ENCODE measurements at regions of chr16 and their contacts with region 1.

Region 1: GRCh38 chr16:68197250-68197649 is 38.7 kb downstream of the ESRP2 start:
- DNase-seq: no peak
- H3K4me3 ChIP-seq: no peak overlapping the region
- H3K4me3 Mint-ChIP-seq: no peak overlapping the region
- H3K27ac ChIP-seq: no peak overlapping the region
- H3K27ac Mint-ChIP-seq: peak overlapping the region in 1 of 8 donors; percentile 61
- H3K4me1 ChIP-seq: no peaks in the 10 kb centered on the region
- H3K4me1 Mint-ChIP-seq: peaks cover 9 to 28% (median 12%) of the 10 kb centered on the region in 3 donors
- H3K27me3 ChIP-seq: no peaks in the 10 kb centered on the region
- H3K27me3 Mint-ChIP-seq: no peaks in the 10 kb centered on the region

Region 2: DNA sequence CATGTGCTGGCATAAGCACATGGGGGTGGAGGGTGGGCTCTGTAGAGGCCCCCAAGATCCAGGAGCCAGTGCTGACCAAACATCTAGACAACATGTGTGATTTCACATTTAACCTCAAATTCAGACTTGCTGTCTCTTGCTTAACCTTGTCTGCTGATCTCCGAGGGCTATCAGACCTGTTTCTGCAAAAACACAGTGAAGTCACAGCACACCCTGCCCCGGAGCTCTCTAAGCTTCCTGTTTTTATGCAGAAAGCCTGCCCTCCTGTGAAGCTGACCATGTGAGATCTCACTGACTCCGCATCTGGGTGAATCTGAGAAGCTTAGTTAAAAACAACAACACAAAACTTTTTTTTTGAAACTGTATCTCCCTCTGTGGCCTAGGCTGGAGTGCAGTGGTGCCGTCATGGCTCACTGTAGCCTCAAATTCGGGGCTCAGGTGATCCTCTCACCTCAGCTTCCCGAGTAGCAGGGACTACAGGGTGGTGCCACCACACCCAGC is 191.4 kb before region 1 on chr16:
- CTCF ChIA-PET with region 1: no interaction called
- POLR2A ChIA-PET with region 1: no interaction called
- DNase-seq: peak in 3 of 5 donors; percentile 57 to 72 (median 70)
- H3K4me3 ChIP-seq: no peak overlapping the region
- H3K4me3 Mint-ChIP-seq: peak overlapping the region in 6 of 7 donors; percentile 49 to 78 (median 73)
- H3K27ac ChIP-seq: peak overlapping the region; percentile 41
- H3K27ac Mint-ChIP-seq: peak overlapping the region; percentile 82 to 98 (median 93)
- H3K4me1 ChIP-seq: peaks cover 41% of the 10 kb centered on the region
- H3K4me1 Mint-ChIP-seq: peaks cover 35 to 42% (median 42%) of the 10 kb centered on the region in 3 donors
- H3K27me3 ChIP-seq: no peaks in the 10 kb centered on the region
- H3K27me3 Mint-ChIP-seq: no peaks in the 10 kb centered on the region

Region 3: GRCh38 chr16:68155425-68155824 is 41.8 kb before region 1 on chr16:
- CTCF ChIA-PET with region 1: no interaction called
- POLR2A ChIA-PET with region 1: no interaction called
- DNase-seq: no peak
- H3K4me3 ChIP-seq: no peak overlapping the region
- H3K4me3 Mint-ChIP-seq: no peak overlapping the region
- H3K27ac ChIP-seq: no peak overlapping the region
- H3K27ac Mint-ChIP-seq: peak overlapping the region in 7 of 8 donors; percentile 36 to 76 (median 49)
- H3K4me1 ChIP-seq: no peaks in the 10 kb centered on the region
- H3K4me1 Mint-ChIP-seq: peaks cover 28 to 45% (median 34%) of the 10 kb centered on the region in 3 donors
- H3K27me3 ChIP-seq: no peaks in the 10 kb centered on the region
- H3K27me3 Mint-ChIP-seq: no peaks in the 10 kb centered on the region

Region 4: GRCh38 chr16:68217506-68217905 is 20.3 kb after region 1 on chr16:
- CTCF ChIA-PET with region 1: no interaction called
- POLR2A ChIA-PET with region 1: interaction called, 10 read pairs
- DNase-seq: no peak
- H3K4me3 ChIP-seq: no peak overlapping the region
- H3K4me3 Mint-ChIP-seq: peak overlapping the region in 1 of 7 donors; percentile 23
- H3K27ac ChIP-seq: no peak overlapping the region
- H3K27ac Mint-ChIP-seq: peak overlapping the region in 7 of 8 donors; percentile 20 to 91 (median 55)
- H3K4me1 ChIP-seq: no peaks in the 10 kb centered on the region
- H3K4me1 Mint-ChIP-seq: peaks cover 21 to 30% (median 24%) of the 10 kb centered on the region in 3 donors
- H3K27me3 ChIP-seq: no peaks in the 10 kb centered on the region
- H3K27me3 Mint-ChIP-seq: no peaks in the 10 kb centered on the region